ENCODE measurements at regions of chr17 and their contacts with region 1.

Region 1: GRCh38 chr17:2244545-2245525 is 58.8 kb downstream of the SMG6 start:
- DNase-seq: peak; percentile 91
- ATAC-seq: peak; percentile 99
- H3K4me3 ChIP-seq: no peak overlapping the region
- H3K27ac ChIP-seq: peak overlapping the region; percentile 77
- H3K4me1 ChIP-seq: peaks cover 9% of the 10 kb centered on the region
- H3K27me3 ChIP-seq: no peaks in the 10 kb centered on the region
- CTCF ChIP-seq: peak; percentile 99

Region 2: GRCh38 chr17:1947229-1947742 is 297.5 kb before region 1 on chr17:
- intact Hi-C with region 1: no loop called
- DNase-seq: no peak
- ATAC-seq: peak; percentile 72
- H3K4me3 ChIP-seq: no peak overlapping the region
- H3K27ac ChIP-seq: no peak overlapping the region
- H3K4me1 ChIP-seq: no peaks in the 10 kb centered on the region
- H3K27me3 ChIP-seq: no peaks in the 10 kb centered on the region
- CTCF ChIP-seq: no peak

Region 3: GRCh38 chr17:2054512-2055291 is 190.1 kb before region 1 on chr17 and contains the start of gene HIC1:
- intact Hi-C with region 1: loop called (anchors 2 kb)
- DNase-seq: peak; percentile 87
- ATAC-seq: peak; percentile 71
- H3K4me3 ChIP-seq: peak within 1 kb of the TSS; percentile 67
- H3K27ac ChIP-seq: peak within 1 kb of the TSS; percentile 84
- H3K4me1 ChIP-seq: peaks cover 40% of the 10 kb centered on the region
- H3K27me3 ChIP-seq: peaks cover 5% of the 10 kb centered on the region
- CTCF ChIP-seq: peak; percentile 95
- total RNA-seq, gene HIC1: 20.8 TPM

Region 4: DNA sequence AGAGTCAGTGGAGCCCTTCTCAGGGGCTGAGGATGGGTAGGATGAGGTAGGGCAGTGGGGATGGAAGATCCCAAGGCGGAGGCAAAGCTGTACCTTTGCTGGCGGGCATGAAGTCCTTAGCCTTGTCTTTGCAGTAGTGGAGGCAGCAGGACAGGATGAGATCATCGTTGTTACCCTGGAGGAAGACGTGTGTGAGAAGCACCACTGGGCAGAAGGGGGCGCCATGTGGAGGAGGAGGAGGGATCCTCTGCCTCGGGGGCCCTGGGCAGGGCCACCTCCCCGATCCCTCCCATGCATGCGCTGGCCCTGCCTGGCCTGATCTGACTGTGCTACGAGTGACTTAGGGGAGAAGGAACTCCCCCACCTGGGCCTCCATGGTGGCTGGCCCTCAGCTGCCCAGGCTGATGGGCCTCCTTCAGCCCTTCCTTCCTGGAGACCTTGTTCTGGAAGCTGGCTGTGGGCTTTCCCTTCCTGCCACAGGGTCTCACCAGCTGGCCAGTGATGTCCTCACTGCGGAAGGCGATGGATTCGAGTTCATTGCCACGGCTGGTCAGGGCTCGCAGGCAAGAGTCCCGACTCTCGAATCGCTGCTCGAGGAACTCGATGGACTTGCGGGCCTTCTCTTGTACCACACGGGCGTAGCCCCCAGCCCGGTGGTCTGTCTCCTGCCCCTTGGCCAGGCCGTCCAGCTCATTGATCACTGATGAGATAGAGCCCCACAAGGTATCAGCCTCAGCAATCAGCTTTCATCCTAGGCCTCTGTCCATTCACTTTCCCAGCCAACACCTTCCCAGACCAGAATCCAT is 179.7 kb before region 1 on chr17:
- intact Hi-C with region 1: no loop called
- DNase-seq: no peak
- ATAC-seq: peak; percentile 54
- H3K4me3 ChIP-seq: no peak overlapping the region
- H3K27ac ChIP-seq: peak overlapping the region; percentile 55
- H3K4me1 ChIP-seq: peaks cover 72% of the 10 kb centered on the region
- H3K27me3 ChIP-seq: no peaks in the 10 kb centered on the region
- CTCF ChIP-seq: peak; percentile 38